ENCODE measurements at regions of chr3 and their contacts with region 1.

Region 1: DNA sequence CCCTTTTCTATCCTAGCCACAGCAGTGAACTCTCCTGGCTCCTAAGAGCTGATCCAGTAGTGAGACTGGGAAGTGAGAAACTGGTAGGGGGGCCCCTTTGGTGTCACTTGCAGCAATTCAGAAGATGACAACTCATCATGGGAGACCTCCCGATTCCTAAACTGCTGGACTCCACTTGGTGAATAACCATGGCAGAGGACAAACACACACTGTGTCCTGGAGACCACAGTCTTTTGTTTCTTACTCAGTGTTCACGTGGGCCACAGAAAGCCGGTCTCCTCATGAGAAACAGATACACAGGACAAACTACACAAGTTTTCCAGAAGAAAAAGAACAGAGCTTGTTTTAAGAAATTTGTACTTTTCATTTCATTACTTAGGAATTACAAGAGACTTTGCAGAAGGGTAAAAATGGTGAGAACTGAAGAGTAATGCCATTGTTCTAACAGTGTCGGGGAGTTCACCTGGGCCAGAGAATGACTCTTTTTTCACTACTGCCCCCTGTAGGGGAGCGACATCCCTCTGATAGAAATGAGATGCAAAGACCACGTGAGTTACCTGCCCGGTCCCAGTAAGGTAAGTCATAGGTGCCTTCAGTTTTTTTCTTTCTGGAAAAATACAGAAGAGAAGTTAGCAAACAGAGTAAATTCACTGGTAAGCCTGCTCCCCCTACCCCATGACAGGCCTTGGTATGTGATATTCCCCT is 38.1 kb downstream of the ST3GAL6 start:
- DNase-seq: no peak
- H3K4me3 ChIP-seq: no peak overlapping the region
- H3K4me3 Mint-ChIP-seq: no peak overlapping the region
- H3K27ac Mint-ChIP-seq: no peak overlapping the region
- H3K4me1 ChIP-seq: peaks cover 5% of the 10 kb centered on the region; the same call in 1 of the 2 replicates
- H3K4me1 Mint-ChIP-seq: peaks cover 2% of the 10 kb centered on the region
- H3K27me3 ChIP-seq: no peaks in the 10 kb centered on the region
- H3K27me3 Mint-ChIP-seq: no peaks in the 10 kb centered on the region
- CTCF ChIP-seq: peak in 1 of 2 experiments; percentile 16

Region 2: GRCh38 chr3:98778852-98779413 is 22.3 kb before region 1 on chr3:
- CTCF ChIA-PET with region 1: no interaction called
- POLR2A ChIA-PET with region 1: no interaction called
- intact Hi-C with region 1: loop called (anchors 1 kb)
- DNase-seq: peak; percentile 57 to 73
- H3K4me3 ChIP-seq: no peak overlapping the region
- H3K4me3 Mint-ChIP-seq: no peak overlapping the region
- H3K27ac Mint-ChIP-seq: peak overlapping the region; percentile 71
- H3K4me1 ChIP-seq: peaks cover 70% of the 10 kb centered on the region
- H3K4me1 Mint-ChIP-seq: peaks cover 56% of the 10 kb centered on the region
- H3K27me3 ChIP-seq: no peaks in the 10 kb centered on the region
- H3K27me3 Mint-ChIP-seq: no peaks in the 10 kb centered on the region
- CTCF ChIP-seq: no peak

Region 3: GRCh38 chr3:98906230-98906629 is 105.0 kb after region 1 on chr3:
- CTCF ChIA-PET with region 1: no interaction called
- POLR2A ChIA-PET with region 1: no interaction called
- intact Hi-C with region 1: no loop called
- DNase-seq: no peak
- H3K4me3 ChIP-seq: no peak overlapping the region
- H3K4me3 Mint-ChIP-seq: no peak overlapping the region
- H3K27ac Mint-ChIP-seq: no peak overlapping the region
- H3K4me1 ChIP-seq: peaks cover 9% of the 10 kb centered on the region; the same call in 1 of the 2 replicates
- H3K4me1 Mint-ChIP-seq: peaks cover 19% of the 10 kb centered on the region
- H3K27me3 ChIP-seq: no peaks in the 10 kb centered on the region
- H3K27me3 Mint-ChIP-seq: no peaks in the 10 kb centered on the region
- CTCF ChIP-seq: no peak

Measured in Caco-2 (cell line).